Activated CD4-positive, alpha-beta memory T cell treated with anti-CD3 and anti-CD28 coated beads for 36 hours (primary cell): ENCODE measurements at regions of chr11 and their contacts with region 1.

Region 1: GRCh38 chr11:67468835-67469811 is at the start of gene TMEM134:
- DNase-seq: peak; percentile 95
- H3K4me3 Mint-ChIP-seq: peak within 1 kb of the TSS; percentile 90
- H3K27ac Mint-ChIP-seq: peak within 1 kb of the TSS; percentile 90
- H3K4me1 Mint-ChIP-seq: peaks cover 30% of the 10 kb centered on the region
- H3K27me3 Mint-ChIP-seq: no peaks in the 10 kb centered on the region
- total RNA-seq, gene TMEM134: 68.2 to 75.2 TPM

Region 2: GRCh38 chr11:67428052-67428914 is 40.8 kb before region 1 on chr11 and contains the start of gene RPS6KB2:
- CTCF ChIA-PET with region 1: no interaction called
- POLR2A ChIA-PET with region 1: interaction called, 6 read pairs
- intact Hi-C with region 1: loop called (anchors 5 kb)
- DNase-seq: peak; percentile 100
- H3K4me3 Mint-ChIP-seq: peak within 1 kb of the TSS; percentile 91
- H3K27ac Mint-ChIP-seq: peak within 1 kb of the TSS; percentile 91
- H3K4me1 Mint-ChIP-seq: peaks cover 32% of the 10 kb centered on the region
- H3K27me3 Mint-ChIP-seq: no peaks in the 10 kb centered on the region
- total RNA-seq, gene RPS6KB2: 57.4 to 57.5 TPM

Region 3: DNA sequence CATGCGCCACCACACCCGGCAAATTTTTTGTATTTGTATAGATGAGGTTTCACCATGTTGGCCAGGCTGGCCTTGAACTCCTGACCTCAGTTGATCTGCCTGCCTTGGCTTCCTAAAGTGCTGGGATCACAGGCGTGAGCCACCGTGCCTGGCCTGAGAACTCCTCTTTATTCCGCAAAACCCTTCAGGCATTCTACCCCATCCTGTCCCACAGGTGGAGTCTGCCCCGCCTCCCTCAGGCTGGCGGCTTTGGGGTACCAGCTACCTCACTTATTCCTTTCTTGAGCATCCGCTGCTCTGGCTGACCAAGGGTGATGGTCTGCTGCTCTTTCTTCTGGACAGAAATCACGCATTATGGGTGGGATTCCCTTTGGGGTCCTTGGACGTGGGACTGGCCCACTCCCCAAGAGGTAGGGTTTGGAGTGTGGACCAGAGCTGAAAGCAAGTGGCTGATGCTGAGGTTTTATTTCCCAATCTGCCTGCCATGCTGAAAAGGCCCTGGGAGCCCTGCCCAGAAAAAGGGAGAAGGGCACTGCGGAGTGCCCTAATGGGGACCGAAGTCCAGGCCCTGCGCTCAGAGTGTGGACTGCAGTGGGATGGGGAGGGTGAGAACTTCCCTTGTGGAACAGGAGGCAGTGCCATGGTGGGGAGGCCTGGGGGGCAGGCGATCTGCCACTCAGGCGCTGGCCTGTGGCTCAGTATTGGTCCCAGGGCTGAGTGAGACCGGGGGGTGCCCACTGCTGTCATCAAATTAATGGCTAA is 21.1 kb before region 1 on chr11:
- CTCF ChIA-PET with region 1: interaction called, 5 read pairs
- POLR2A ChIA-PET with region 1: interaction called, 3 read pairs
- intact Hi-C with region 1: loop called (anchors 2 kb)
- DNase-seq: no peak
- H3K4me3 Mint-ChIP-seq: no peak overlapping the region
- H3K27ac Mint-ChIP-seq: peak overlapping the region; percentile 11
- H3K4me1 Mint-ChIP-seq: peaks cover 54% of the 10 kb centered on the region
- H3K27me3 Mint-ChIP-seq: no peaks in the 10 kb centered on the region